Naive thymus-derived CD4-positive, alpha-beta T cell (primary cell): ENCODE measurements at regions of chr1 and their contacts with region 1.

Region 1: DNA sequence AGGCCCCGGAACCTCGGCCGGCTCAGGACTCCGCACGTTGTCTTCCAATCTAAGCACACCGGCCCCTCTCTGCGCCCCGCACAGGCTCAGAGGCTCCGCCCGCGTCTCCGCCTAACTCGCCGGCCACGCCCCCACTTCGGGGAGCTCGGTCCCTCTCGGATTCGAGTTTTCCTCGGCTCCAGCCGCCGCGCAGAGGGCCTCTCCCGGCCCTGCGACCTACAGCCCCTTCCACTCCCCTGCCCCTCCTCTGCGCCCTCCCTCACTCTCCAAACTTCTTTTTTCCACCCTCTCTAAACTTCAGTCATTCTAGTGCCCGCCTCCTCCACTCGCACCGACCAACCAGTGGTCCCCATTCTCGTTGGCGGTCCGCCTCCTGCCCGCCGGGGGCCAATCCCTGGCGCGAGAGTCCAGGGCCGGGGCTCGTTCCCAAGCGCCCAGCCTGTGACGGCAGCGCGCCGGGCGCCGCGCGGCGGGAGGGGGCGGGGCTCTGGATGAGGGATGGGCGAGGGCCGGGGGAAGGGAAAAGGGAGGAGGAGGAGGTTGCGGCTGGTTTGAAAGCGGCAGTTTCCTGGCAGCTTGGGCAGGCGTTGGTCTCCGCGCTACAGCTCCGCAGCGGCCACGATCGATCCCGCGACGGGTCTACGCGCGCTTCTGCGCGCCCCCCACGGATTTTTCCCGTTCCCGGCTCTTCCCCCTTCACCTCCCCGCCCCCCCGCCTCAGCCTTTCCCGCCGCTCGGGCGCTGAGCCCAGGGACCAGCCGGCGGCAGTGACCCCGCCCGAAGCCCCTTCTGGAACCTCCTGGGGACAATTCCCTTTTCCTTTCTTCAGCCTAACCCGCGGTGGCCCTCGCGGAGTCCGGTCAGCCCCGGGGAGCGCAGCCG is at the start of gene MAGI3:
- DNase-seq: peak; percentile 84 to 97 (median 91)
- ATAC-seq: peak; percentile 95
- H3K4me3 ChIP-seq: peak within 1 kb of the TSS; percentile 88
- H3K4me3 Mint-ChIP-seq: peak within 1 kb of the TSS; percentile 84 to 98 (median 94)
- H3K27ac ChIP-seq: peak within 1 kb of the TSS; percentile 71
- H3K27ac Mint-ChIP-seq: peak within 1 kb of the TSS; percentile 38 to 89 (median 85)
- H3K4me1 ChIP-seq: peaks cover 0 to 16% of the 10 kb centered on the region in 2 donors
- H3K4me1 Mint-ChIP-seq: peaks cover 22 to 31% (median 26%) of the 10 kb centered on the region in 7 donors
- H3K27me3 ChIP-seq: no peaks in the 10 kb centered on the region
- H3K27me3 Mint-ChIP-seq: peaks cover 0 to 42% (median 6%) of the 10 kb centered on the region in 5 donors
- total RNA-seq, gene MAGI3: 5.7 to 8.8 (median 7.2) TPM

Region 2: GRCh38 chr1:112619520-112620376 is 770.4 kb before region 1 on chr1 and contains the start of gene CAPZA1:
- CTCF ChIA-PET with region 1: no interaction called
- POLR2A ChIA-PET with region 1: no interaction called
- intact Hi-C with region 1: loop called (anchors 1 to 5 kb)
- DNase-seq: peak; percentile 83 to 93 (median 91)
- ATAC-seq: peak; percentile 89
- H3K4me3 ChIP-seq: peak within 1 kb of the TSS; percentile 93
- H3K4me3 Mint-ChIP-seq: peak within 1 kb of the TSS; percentile 98 to 100 (median 99)
- H3K27ac ChIP-seq: peak within 1 kb of the TSS; percentile 100
- H3K27ac Mint-ChIP-seq: peak within 1 kb of the TSS; percentile 99 to 100 (median 100)
- H3K4me1 ChIP-seq: peaks cover 19 to 21% of the 10 kb centered on the region in 2 donors
- H3K4me1 Mint-ChIP-seq: peaks cover 27 to 55% (median 46%) of the 10 kb centered on the region in 7 donors
- H3K27me3 ChIP-seq: no peaks in the 10 kb centered on the region
- H3K27me3 Mint-ChIP-seq: peaks cover 0 to 1% (median 0%) of the 10 kb centered on the region in 5 donors
- total RNA-seq, gene CAPZA1: 114 to 237 (median 143) TPM

Region 3: GRCh38 chr1:113415310-113416070 is 25.3 kb after region 1 on chr1:
- CTCF ChIA-PET with region 1: interaction called, 3 read pairs
- POLR2A ChIA-PET with region 1: interaction called, 3 read pairs
- intact Hi-C with region 1: loop called (anchors 1 kb)
- DNase-seq: peak in 5 of 9 donors; percentile 1 to 27 (median 10)
- ATAC-seq: no peak
- H3K4me3 ChIP-seq: no peak overlapping the region
- H3K4me3 Mint-ChIP-seq: no peak overlapping the region
- H3K27ac ChIP-seq: no peak overlapping the region
- H3K27ac Mint-ChIP-seq: peak overlapping the region in 5 of 9 donors; percentile 0 to 27 (median 1)
- H3K4me1 ChIP-seq: no peaks in the 10 kb centered on the region
- H3K4me1 Mint-ChIP-seq: peaks cover 0 to 5% (median 0%) of the 10 kb centered on the region in 7 donors
- H3K27me3 ChIP-seq: no peaks in the 10 kb centered on the region
- H3K27me3 Mint-ChIP-seq: no peaks in the 10 kb centered on the region

Region 4: DNA sequence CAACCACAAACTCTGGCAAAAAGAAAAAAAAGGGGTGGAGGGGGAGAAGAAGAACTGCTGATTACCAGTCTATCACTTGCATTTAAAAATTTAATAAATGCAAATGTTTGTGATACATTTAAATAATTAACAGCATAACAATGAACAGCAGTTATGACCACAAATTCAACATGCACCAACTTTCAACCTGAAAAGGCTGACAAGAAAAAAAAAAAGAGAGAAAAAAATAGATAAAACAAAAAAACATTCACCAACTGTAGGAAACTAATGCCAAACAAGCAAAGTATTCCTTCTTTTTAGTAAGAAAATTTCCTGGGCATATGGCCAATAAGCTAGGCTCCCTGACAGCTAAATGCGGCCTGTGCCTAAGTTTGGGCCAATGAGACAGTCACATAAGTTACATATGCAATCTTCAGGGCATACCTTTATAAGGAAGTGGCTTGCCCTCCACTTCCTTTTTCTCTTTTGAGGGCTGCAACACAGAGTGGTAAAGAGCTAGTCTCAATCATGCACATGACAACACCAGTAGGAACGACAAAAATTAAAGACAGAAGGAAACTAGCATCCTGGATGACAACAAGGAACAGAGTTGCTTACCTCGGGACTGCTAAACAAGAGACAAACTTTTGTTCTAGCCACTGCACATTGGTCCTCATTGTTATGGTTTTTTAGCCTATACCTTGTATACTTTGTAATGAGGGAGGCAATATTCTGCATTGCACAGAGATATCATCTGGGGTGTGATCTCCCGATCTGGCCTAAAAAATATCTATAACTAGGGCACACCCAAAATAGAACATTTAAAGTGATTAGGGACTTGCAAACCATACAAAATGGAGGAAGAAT is 393.3 kb after region 1 on chr1:
- CTCF ChIA-PET with region 1: no interaction called
- POLR2A ChIA-PET with region 1: no interaction called
- intact Hi-C with region 1: loop called (anchors 10 kb)
- DNase-seq: peak in 7 of 9 donors; percentile 57 to 74 (median 66)
- ATAC-seq: peak; percentile 98
- H3K4me3 ChIP-seq: peak overlapping the region; percentile 7
- H3K4me3 Mint-ChIP-seq: peak overlapping the region in 7 of 10 donors; percentile 5 to 80 (median 67)
- H3K27ac ChIP-seq: peak overlapping the region; percentile 61
- H3K27ac Mint-ChIP-seq: peak overlapping the region in 4 of 9 donors; percentile 60 to 97 (median 90)
- H3K4me1 ChIP-seq: peaks cover 52 to 62% of the 10 kb centered on the region in 2 donors
- H3K4me1 Mint-ChIP-seq: peaks cover 34 to 54% (median 42%) of the 10 kb centered on the region in 7 donors
- H3K27me3 ChIP-seq: no peaks in the 10 kb centered on the region
- H3K27me3 Mint-ChIP-seq: no peaks in the 10 kb centered on the region

Region 5: DNA sequence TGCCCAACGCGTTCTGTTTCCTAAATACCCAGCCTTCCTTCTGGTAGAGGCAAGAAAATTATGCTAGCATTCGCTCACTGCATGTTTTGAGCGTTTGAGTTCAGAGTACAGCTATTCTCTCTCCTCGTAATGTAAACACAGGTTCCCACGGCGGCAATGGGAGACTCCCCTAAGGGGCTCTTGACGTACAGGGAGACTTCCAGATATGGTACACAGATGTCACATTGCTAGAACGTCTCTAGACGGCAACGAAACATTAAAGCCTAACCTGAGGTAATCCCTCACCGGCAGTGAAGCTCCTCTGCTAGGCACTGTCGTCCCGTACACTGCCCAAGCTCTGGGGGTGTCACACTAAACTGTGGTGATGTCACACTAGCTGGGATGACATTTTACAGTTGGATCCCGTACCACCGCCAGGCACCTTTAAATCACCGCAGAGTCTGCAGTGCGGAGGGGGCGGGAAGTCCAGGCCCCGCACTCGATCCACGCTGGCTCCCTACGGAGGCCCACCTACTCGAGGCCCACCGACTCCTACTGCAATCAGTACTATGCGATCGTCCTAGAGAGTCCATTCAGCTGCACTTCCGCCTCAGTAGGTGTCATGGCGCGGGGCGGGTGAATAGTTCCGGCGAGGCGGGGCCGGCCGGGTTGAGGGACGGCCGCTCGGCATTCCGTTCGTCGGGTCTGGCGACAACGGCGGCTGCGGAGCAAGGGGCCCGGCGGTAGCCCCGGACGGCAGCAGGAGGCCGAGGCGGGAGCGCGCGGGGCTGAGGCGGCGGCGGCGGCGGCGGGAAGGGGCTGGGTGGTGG is 539.0 kb after region 1 on chr1 and contains the start of gene HIPK1:
- CTCF ChIA-PET with region 1: interaction called, 3 read pairs
- POLR2A ChIA-PET with region 1: no interaction called
- intact Hi-C with region 1: loop called in 1 of 2 experiments (anchors 2 kb)
- DNase-seq: peak; percentile 88 to 97 (median 93)
- ATAC-seq: peak; percentile 69
- H3K4me3 ChIP-seq: peak within 1 kb of the TSS; percentile 100
- H3K4me3 Mint-ChIP-seq: peak within 1 kb of the TSS; percentile 96 to 100 (median 99)
- H3K27ac ChIP-seq: peak within 1 kb of the TSS; percentile 99
- H3K27ac Mint-ChIP-seq: peak within 1 kb of the TSS; percentile 93 to 100 (median 100)
- H3K4me1 ChIP-seq: peaks cover 41 to 46% of the 10 kb centered on the region in 2 donors
- H3K4me1 Mint-ChIP-seq: peaks cover 41 to 56% (median 48%) of the 10 kb centered on the region in 7 donors
- H3K27me3 ChIP-seq: no peaks in the 10 kb centered on the region
- H3K27me3 Mint-ChIP-seq: peaks cover 0 to 12% (median 0%) of the 10 kb centered on the region in 5 donors
- total RNA-seq, gene HIPK1: 95.8 to 211 (median 124) TPM

Region 6: GRCh38 chr1:114757455-114758250 is 1367.5 kb after region 1 on chr1 and contains the start of gene CSDE1:
- CTCF ChIA-PET with region 1: no interaction called
- POLR2A ChIA-PET with region 1: no interaction called
- intact Hi-C with region 1: loop called in 1 of 2 experiments (anchors 1 kb)
- DNase-seq: peak; percentile 91 to 97 (median 96)
- ATAC-seq: peak; percentile 90
- H3K4me3 ChIP-seq: peak within 1 kb of the TSS; percentile 100
- H3K4me3 Mint-ChIP-seq: peak within 1 kb of the TSS; percentile 95 to 100 (median 100)
- H3K27ac ChIP-seq: peak within 1 kb of the TSS; percentile 97
- H3K27ac Mint-ChIP-seq: peak within 1 kb of the TSS; percentile 97 to 100 (median 100)
- H3K4me1 ChIP-seq: peaks cover 44 to 49% of the 10 kb centered on the region in 2 donors
- H3K4me1 Mint-ChIP-seq: peaks cover 32 to 60% (median 51%) of the 10 kb centered on the region in 7 donors
- H3K27me3 ChIP-seq: no peaks in the 10 kb centered on the region
- H3K27me3 Mint-ChIP-seq: no peaks in the 10 kb centered on the region
- total RNA-seq, gene CSDE1: 378 to 638 (median 561) TPM